HepG2 (cell line): ENCODE measurements at regions of chr15 and their contacts with region 1.

Region 1: GRCh38 chr15:74036271-74037170 is 42.0 kb downstream of the PML start:
- DNase-seq: peak; percentile 51
- ATAC-seq: peak; percentile 78
- H3K4me3 ChIP-seq: no peak overlapping the region
- H3K27ac ChIP-seq: no peak overlapping the region
- H3K4me1 ChIP-seq: no peaks in the 10 kb centered on the region
- H3K27me3 ChIP-seq: 0 out of 5 replicates have a peak, but pooled peaks cover 0 to 6% of the 10 kb centered on the region in 2 experiments
- CTCF ChIP-seq: peak; percentile 73
- EP300 ChIP-seq: no peak
- POLR2A ChIP-seq: no peak
- RAD21 ChIP-seq: no peak

Region 2: GRCh38 chr15:73897441-73898261 is 138.9 kb before region 1 on chr15:
- CTCF ChIA-PET with region 1: no interaction called
- POLR2A ChIA-PET with region 1: no interaction called
- in situ Hi-C with region 1: no loop called
- intact Hi-C with region 1: no loop called
- DNase-seq: peak; percentile 25
- ATAC-seq: peak; percentile 92
- H3K4me3 ChIP-seq: no peak overlapping the region
- H3K27ac ChIP-seq: no peak overlapping the region
- H3K4me1 ChIP-seq: no peaks in the 10 kb centered on the region
- H3K27me3 ChIP-seq: peaks cover 0 to 3% of the 10 kb centered on the region in 2 experiments; a peak in 1 of 5 replicates
- CTCF ChIP-seq: peak; percentile 87
- EP300 ChIP-seq: no peak
- POLR2A ChIP-seq: no peak
- RAD21 ChIP-seq: peak; percentile 14; the same call in 1 of the 2 replicates

Region 3: DNA sequence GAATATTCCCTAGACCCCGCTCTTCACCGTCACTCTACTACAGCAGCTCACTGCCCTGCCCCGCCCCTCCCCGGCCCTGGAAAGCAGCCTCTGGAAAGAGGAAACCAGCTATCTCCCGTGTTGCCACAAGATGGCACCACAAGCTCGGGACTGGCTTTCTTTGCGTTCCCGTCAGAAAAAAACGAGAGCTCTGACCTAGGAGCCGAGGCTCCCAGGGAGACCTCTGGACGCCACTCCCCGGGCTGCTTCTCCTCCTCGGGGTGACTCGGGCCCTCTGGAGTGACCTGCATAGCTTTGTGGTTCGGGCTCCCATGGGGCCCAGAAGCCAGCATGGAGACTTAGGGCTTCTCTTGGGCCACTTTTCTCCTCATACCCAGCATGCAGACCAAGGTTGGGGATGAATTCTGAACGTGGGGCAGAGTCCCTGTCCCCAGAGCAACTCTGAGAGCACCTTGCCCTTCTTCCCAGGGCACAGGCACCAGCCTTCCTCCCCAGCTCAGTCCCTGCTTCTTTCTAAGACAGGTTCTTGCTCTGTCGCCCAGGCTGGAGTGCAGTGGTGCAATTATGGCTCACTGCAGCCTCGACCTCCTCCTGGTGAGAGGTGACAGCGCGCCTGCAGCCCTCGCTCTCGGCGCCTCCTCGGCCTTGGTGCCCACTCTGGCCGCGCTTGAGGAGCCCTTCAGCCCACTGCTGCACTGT is 63.4 kb before region 1 on chr15:
- CTCF ChIA-PET with region 1: interaction called, 19 read pairs
- POLR2A ChIA-PET with region 1: interaction called, 5 read pairs
- in situ Hi-C with region 1: loop called (anchors 5 kb)
- intact Hi-C with region 1: no loop called
- DNase-seq: peak; percentile 79
- ATAC-seq: peak; percentile 96
- H3K4me3 ChIP-seq: peak overlapping the region; percentile 36 to 68 (median 44); a peak in 5 of 6 replicates
- H3K27ac ChIP-seq: no peak overlapping the region
- H3K4me1 ChIP-seq: no peaks in the 10 kb centered on the region
- H3K27me3 ChIP-seq: no peaks in the 10 kb centered on the region
- CTCF ChIP-seq: peak; percentile 97
- EP300 ChIP-seq: no peak
- POLR2A ChIP-seq: no peak
- RAD21 ChIP-seq: peak; percentile 91

Region 4: GRCh38 chr15:74545880-74546656 is 509.5 kb after region 1 on chr15:
- CTCF ChIA-PET with region 1: no interaction called
- POLR2A ChIA-PET with region 1: no interaction called
- in situ Hi-C with region 1: no loop called
- intact Hi-C with region 1: no loop called
- DNase-seq: peak; percentile 93
- ATAC-seq: peak; percentile 92
- H3K4me3 ChIP-seq: no peak overlapping the region
- H3K27ac ChIP-seq: no peak overlapping the region
- H3K4me1 ChIP-seq: peaks cover 37% of the 10 kb centered on the region
- H3K27me3 ChIP-seq: no peaks in the 10 kb centered on the region
- CTCF ChIP-seq: peak; percentile 27; the same call in 1 of the 2 replicates
- EP300 ChIP-seq: peak in 1 of 2 experiments; percentile 51; a peak in 1 of 4 replicates
- POLR2A ChIP-seq: no peak
- RAD21 ChIP-seq: 0 out of 2 replicates have a peak, but pooled peaks have one; percentile 10